ENCODE measurements at regions of chr1 and their contacts with region 1.

Region 1: DNA sequence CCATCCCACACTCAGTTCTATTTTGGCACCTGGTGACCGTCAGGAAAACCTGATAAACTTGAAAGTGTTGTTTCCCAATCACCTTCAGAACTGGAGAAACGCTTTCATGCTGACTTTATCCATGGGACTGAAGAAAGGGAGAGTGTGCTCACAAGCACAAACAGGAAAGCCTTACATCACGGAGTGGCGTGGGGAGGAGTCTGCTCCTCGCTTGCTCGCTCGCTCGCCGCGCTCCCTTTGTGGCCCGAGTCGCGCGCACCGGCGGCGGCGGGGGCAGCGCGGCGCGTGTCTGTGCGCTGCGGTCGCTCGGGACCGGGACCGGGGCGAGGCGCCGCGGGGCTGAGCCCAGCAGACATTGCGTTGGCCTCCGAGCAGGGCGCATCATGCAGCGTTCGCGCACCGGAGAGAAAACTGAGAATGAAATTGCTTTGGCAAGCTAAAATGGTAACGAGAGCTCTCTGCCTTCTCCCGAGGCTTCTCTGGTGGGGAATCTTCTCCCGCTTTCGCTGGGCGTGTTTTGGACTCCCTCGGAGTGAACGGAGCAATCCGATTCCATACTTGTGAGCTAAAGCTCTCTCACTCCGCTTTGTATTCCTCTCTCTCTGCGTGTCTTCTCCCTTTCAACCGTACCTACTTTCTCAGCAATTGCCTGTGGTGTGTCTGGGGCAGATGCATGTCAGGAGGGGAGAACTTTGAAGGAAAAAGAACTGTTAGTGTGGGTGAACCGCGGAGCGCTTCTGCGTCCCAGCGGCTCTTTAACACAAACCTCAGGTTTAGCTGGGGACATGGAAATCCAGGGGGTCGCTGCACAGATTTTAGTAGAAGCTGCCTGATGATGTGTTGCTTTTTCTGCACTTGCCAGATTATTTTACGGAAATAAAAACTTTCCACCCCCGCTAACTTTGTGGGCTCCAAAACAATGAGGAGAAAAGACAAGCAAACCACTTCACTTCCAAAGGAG is at the start of gene RGL1:
- DNase-seq: peak; percentile 75
- ATAC-seq: peak; percentile 89
- H3K4me3 ChIP-seq: peak within 1 kb of the TSS; percentile 80
- H3K27ac ChIP-seq: peak within 1 kb of the TSS; percentile 78
- H3K4me1 ChIP-seq: peaks cover 7% of the 10 kb centered on the region
- H3K27me3 ChIP-seq: no peaks in the 10 kb centered on the region
- CTCF ChIP-seq: no peak
- POLR2A ChIP-seq: peak; percentile 45; the same call in 1 of the 2 replicates
- RAD21 ChIP-seq: no peak
- total RNA-seq, gene RGL1: 7.5 TPM in 2 replicates

Region 2: DNA sequence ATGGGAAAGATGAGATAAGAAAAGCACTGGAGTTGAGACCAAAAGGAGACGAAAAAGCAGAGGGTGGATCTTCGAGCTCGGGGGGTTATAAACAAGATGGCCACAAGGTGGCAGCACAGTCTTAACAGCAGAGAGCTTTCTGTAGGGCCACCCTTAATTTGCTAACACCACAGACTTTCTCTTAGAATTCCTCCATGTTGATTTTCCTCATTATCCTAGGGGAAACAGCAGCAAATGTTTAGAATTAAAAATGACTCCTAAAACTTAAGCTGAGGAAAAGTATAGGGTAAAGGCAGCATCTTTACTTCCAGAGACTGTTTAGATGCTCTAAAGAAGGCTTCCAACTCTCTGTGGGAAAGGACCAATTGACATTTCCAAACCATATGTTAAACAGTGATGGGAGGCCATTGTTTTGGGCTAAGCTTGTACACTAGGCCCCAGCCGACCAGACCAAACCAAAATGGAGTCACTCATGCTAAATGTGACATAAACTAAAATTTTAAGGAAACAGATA is 149.5 kb before region 1 on chr1:
- CTCF ChIA-PET with region 1: no interaction called
- POLR2A ChIA-PET with region 1: no interaction called
- dilution Hi-C with region 1: no loop called
- in situ Hi-C with region 1: no loop called
- intact Hi-C with region 1: loop called (anchors 5 kb)
- DNase-seq: peak; percentile 84
- ATAC-seq: peak; percentile 96
- H3K4me3 ChIP-seq: no peak overlapping the region
- H3K27ac ChIP-seq: no peak overlapping the region
- H3K4me1 ChIP-seq: peaks cover 6% of the 10 kb centered on the region
- H3K27me3 ChIP-seq: no peaks in the 10 kb centered on the region
- CTCF ChIP-seq: peak; percentile 92
- POLR2A ChIP-seq: 0 out of 2 replicates have a peak, but pooled peaks have one; percentile 32
- RAD21 ChIP-seq: peak; percentile 92

Region 3: GRCh38 chr1:183872403-183872802 is 67.2 kb after region 1 on chr1:
- CTCF ChIA-PET with region 1: no interaction called
- POLR2A ChIA-PET with region 1: no interaction called
- dilution Hi-C with region 1: no loop called
- in situ Hi-C with region 1: no loop called
- intact Hi-C with region 1: loop called (anchors 1 kb)
- DNase-seq: peak; percentile 79
- ATAC-seq: peak; percentile 85
- H3K4me3 ChIP-seq: peak overlapping the region; percentile 27; the same call in 1 of the 2 replicates
- H3K27ac ChIP-seq: peak overlapping the region; percentile 31; the same call in 1 of the 2 replicates
- H3K4me1 ChIP-seq: peaks cover 11% of the 10 kb centered on the region; the same call in 1 of the 2 replicates
- H3K27me3 ChIP-seq: no peaks in the 10 kb centered on the region
- CTCF ChIP-seq: no peak
- POLR2A ChIP-seq: no peak
- RAD21 ChIP-seq: no peak

Measured in IMR-90 (cell line).